ENCODE measurements at regions of chr7 and their contacts with region 1.

Region 1: GRCh38 chr7:144854839-144855424 is 19.1 kb upstream of the TPK1 start:
- DNase-seq: no peak
- H3K4me3 Mint-ChIP-seq: no peak overlapping the region
- H3K27ac Mint-ChIP-seq: no peak overlapping the region
- H3K4me1 Mint-ChIP-seq: no peaks in the 10 kb centered on the region
- H3K27me3 Mint-ChIP-seq: no peaks in the 10 kb centered on the region
- CTCF ChIP-seq: peak; percentile 71

Region 2: DNA sequence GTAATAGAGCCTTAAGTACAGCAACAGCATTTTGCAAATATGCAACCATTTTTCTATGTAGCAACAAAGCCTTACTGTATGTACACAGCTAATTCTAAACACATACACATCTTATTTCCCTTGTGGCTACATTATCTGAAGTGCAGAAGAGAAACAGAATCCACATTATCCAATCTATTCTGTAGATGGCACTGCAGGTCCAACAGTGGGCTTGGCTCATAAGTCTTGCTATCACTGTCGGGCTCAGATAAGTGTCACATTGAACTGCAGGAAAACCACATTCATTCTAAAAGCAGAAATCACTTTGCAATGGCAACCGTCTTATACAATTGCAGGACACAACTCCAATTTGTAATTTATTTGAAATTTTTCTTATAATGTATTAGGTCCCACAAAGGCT is 341.6 kb before region 1 on chr7:
- CTCF ChIA-PET with region 1: no interaction called
- intact Hi-C with region 1: loop called (anchors 10 kb)
- DNase-seq: no peak
- H3K4me3 Mint-ChIP-seq: no peak overlapping the region
- H3K27ac Mint-ChIP-seq: no peak overlapping the region
- H3K4me1 Mint-ChIP-seq: no peaks in the 10 kb centered on the region
- H3K27me3 Mint-ChIP-seq: no peaks in the 10 kb centered on the region
- CTCF ChIP-seq: no peak

Region 3: DNA sequence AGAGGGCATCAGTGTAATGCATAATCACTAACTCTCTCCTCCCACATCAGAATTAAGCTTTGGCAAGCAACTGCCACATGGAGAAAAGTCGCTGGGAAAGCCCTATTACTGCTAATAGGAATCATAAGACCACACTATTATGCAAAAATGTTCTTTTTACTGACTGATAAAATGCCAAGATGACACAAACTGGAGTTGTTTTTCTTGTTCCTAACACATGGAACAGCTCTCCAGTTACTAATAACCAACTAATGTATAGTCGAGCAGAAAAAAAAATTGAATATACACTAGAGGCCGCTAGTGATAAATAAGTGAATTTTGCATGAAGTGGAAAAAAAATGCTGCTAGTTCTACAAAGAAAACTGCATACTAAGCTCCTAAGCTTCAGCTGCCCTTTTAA is 184.7 kb before region 1 on chr7:
- CTCF ChIA-PET with region 1: no interaction called
- intact Hi-C with region 1: loop called (anchors 5 kb)
- DNase-seq: no peak
- H3K4me3 Mint-ChIP-seq: no peak overlapping the region
- H3K27ac Mint-ChIP-seq: no peak overlapping the region
- H3K4me1 Mint-ChIP-seq: no peaks in the 10 kb centered on the region
- H3K27me3 Mint-ChIP-seq: no peaks in the 10 kb centered on the region
- CTCF ChIP-seq: no peak

Region 4: GRCh38 chr7:144936314-144936713 is 81.4 kb after region 1 on chr7:
- CTCF ChIA-PET with region 1: no interaction called
- intact Hi-C with region 1: no loop called
- DNase-seq: no peak
- H3K4me3 Mint-ChIP-seq: no peak overlapping the region
- H3K27ac Mint-ChIP-seq: no peak overlapping the region
- H3K4me1 Mint-ChIP-seq: no peaks in the 10 kb centered on the region
- H3K27me3 Mint-ChIP-seq: no peaks in the 10 kb centered on the region
- CTCF ChIP-seq: no peak

Region 5: GRCh38 chr7:145036604-145037405 is 181.9 kb after region 1 on chr7:
- CTCF ChIA-PET with region 1: no interaction called
- intact Hi-C with region 1: loop called (anchors 5 kb)
- DNase-seq: peak; percentile 52
- H3K4me3 Mint-ChIP-seq: no peak overlapping the region
- H3K27ac Mint-ChIP-seq: no peak overlapping the region
- H3K4me1 Mint-ChIP-seq: no peaks in the 10 kb centered on the region
- H3K27me3 Mint-ChIP-seq: no peaks in the 10 kb centered on the region
- CTCF ChIP-seq: peak; percentile 65

Measured in Calu3 (cell line).